ENCODE measurements at regions of chr6 and their contacts with region 1.

Region 1: DNA sequence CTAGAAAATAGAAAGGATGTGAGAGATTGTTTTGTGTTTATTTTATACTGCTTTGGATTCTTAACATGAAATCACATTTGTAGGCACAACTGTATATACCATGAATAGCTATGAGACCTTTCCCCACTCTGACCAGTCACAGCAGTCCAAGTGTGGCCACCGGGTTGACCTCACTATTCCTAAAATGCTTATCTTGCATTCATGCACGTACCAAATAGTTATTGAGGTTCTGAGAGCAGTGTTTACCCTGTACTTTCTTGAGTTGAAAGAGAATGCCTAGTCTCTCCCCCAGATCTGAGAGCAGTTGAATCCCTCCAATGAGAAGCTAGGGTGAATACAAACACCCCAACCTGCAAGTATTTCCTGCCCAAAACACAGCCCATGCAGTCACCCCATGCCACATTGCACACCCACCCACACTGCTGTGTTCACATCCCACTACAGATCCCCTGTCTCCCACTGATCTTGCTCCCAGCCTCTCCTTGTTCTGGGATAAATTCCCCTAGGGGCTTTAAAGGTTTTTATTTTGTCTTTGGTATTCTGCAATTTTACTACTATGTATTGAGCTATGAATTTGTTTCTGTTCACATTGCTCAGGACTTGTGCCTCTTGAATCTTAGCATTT is 51.6 kb downstream of the GOPC start:
- DNase-seq: no peak
- H3K4me3 ChIP-seq: no peak overlapping the region
- H3K27ac ChIP-seq: no peak overlapping the region
- H3K4me1 ChIP-seq: no peaks in the 10 kb centered on the region
- H3K27me3 ChIP-seq: no peaks in the 10 kb centered on the region
- CTCF ChIP-seq: no peak

Region 2: DNA sequence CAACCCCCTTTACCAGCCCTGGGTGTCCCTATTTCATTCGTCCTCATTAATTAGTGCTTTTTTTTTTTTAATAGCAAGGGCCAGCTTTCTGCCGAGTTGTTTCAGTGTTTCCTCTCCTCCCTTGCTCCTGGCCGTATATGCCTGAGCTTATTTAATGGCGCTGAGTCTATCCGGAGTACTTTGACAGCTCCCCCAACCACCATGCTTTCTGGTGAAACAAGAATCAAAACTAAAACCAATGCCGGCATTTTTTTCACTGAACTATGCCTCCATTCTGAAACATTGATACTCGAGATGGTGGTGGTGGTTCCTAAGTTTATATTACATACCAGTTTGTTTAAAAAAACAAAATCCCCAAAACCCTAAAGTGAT is 67.1 kb before region 1 on chr6:
- CTCF ChIA-PET with region 1: no interaction called
- POLR2A ChIA-PET with region 1: interaction called, 10 read pairs
- intact Hi-C with region 1: no loop called
- DNase-seq: peak; percentile 23
- H3K4me3 ChIP-seq: peak overlapping the region; percentile 51
- H3K27ac ChIP-seq: no peak overlapping the region
- H3K4me1 ChIP-seq: no peaks in the 10 kb centered on the region
- H3K27me3 ChIP-seq: peaks cover 62% of the 10 kb centered on the region
- CTCF ChIP-seq: no peak

Region 3: GRCh38 chr6:117498159-117498558 is 52.6 kb before region 1 on chr6:
- CTCF ChIA-PET with region 1: no interaction called
- POLR2A ChIA-PET with region 1: interaction called, 18 read pairs
- intact Hi-C with region 1: no loop called
- DNase-seq: no peak
- H3K4me3 ChIP-seq: no peak overlapping the region
- H3K27ac ChIP-seq: no peak overlapping the region
- H3K4me1 ChIP-seq: no peaks in the 10 kb centered on the region
- H3K27me3 ChIP-seq: no peaks in the 10 kb centered on the region
- CTCF ChIP-seq: no peak